ENCODE measurements at regions of chr5 and their contacts with region 1.

Region 1: GRCh38 chr5:172714491-172715421 is 56.2 kb downstream of the DUSP1 start:
- ATAC-seq: peak; percentile 66 to 83 (median 74)
- H3K4me3 ChIP-seq: no peak overlapping the region
- H3K27ac ChIP-seq: no peak overlapping the region
- H3K4me1 ChIP-seq: peaks cover 0 to 7% of the 10 kb centered on the region in 2 donors

Region 2: DNA sequence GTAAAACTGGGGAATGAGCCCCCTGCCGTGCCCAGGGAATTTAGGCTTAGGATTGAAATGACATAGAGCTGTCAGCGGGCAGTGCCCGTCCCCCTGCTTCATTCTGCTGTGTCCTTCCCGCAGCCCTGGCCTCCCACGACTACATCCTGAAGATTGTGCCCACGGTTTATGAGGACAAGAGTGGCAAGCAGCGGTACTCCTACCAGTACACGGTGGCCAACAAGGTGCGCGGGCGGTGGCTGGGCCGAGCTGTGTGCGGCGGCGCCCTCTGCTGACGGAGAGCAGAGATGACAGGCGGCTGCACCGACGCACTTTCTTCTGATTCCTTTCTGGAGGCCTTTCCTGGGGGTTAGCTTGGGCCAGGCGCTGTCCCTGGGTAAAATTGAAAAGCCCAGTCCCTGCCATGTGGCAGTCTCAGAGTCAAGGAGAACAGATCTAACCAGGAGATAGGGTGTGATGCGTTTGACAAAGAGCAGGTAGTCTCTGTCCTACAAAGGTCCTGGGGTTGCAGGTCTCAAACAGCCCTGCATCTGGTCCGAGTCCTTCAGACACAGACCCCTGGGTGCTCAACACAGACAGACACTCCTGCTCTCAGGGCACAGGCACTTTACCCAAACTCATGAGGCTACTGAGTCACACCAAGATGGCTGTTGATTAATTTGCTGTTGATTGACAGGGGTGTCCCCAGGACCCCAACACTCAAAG is 217.7 kb after region 1 on chr5:
- in situ Hi-C with region 1: loop called (anchors 5 to 25 kb)
- ATAC-seq: peak; percentile 62 to 85 (median 68)
- H3K4me3 ChIP-seq: no peak overlapping the region
- H3K27ac ChIP-seq: no peak overlapping the region
- H3K4me1 ChIP-seq: peaks cover 11 to 17% of the 10 kb centered on the region in 2 donors

Region 3: GRCh38 chr5:173144200-173145176 is 429.7 kb after region 1 on chr5 and contains the start of gene BNIP1:
- in situ Hi-C with region 1: loop called in 1 of 9 experiments (anchors 25 kb)
- ATAC-seq: peak; percentile 82 to 92 (median 90)
- H3K4me3 ChIP-seq: peak within 1 kb of the TSS; percentile 84 to 99 (median 88)
- H3K27ac ChIP-seq: peak within 1 kb of the TSS; percentile 82 to 97
- H3K4me1 ChIP-seq: peaks cover 0 to 4% of the 10 kb centered on the region in 2 donors
- total RNA-seq, gene BNIP1: 9.1 to 23.5 (median 16.4) TPM

Region 4: DNA sequence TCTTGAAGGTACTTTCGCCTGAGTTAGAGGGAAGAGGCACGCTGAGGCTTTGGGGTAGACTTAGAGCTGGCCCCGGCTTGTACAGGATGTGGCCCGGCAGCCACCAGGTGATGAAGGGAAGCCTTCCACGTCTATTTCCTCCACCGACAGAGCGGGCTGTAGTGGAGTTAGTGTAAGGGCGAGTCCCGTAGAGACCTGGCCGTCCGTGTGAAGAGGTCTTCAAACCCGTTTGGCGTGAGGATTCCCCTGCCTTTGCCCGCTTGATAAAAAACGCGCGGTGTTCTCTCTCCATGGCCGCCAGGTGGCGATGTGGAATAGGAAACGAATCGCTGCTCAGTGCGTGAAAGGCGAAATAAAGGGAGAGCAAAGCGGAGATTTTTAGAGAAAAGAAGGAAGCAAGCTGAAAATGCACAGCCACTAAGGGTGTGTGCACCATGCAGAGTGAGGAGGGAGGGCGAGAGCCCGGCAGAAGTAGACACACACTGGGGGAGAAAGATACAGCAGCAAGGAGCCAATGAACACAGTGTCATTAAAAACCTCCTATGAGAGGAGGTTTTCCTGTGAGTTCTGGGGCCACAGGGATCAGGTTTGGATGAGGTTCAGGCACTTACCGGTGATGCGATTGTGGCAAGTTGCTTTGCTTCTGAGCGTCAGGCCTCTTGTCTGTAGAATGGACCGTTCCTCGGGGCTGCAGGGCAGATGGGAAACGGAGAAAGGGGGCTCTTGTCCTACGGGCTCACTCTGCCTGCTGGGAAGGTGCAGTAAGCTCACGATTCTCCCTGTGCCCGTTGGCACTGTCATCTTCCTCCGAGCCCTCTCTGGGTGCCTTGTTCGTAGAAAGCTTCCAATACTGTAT is 579.3 kb after region 1 on chr5:
- in situ Hi-C with region 1: loop called in 2 of 9 experiments (anchors 25 kb)
- ATAC-seq: peak; percentile 80 to 97 (median 86)
- H3K4me3 ChIP-seq: no peak overlapping the region
- H3K27ac ChIP-seq: no peak overlapping the region
- H3K4me1 ChIP-seq: peaks cover 30 to 54% of the 10 kb centered on the region in 2 donors

Region 5: GRCh38 chr5:173331956-173332479 is 617.3 kb after region 1 on chr5:
- in situ Hi-C with region 1: loop called in 1 of 9 experiments (anchors 25 kb)
- ATAC-seq: peak; percentile 26 to 72 (median 38)
- H3K4me3 ChIP-seq: no peak overlapping the region
- H3K27ac ChIP-seq: no peak overlapping the region
- H3K4me1 ChIP-seq: peaks cover 9 to 11% of the 10 kb centered on the region in 2 donors